Mammary epithelial cell (primary cell): ENCODE measurements at regions of chr2 and their contacts with region 1.

Region 1: DNA sequence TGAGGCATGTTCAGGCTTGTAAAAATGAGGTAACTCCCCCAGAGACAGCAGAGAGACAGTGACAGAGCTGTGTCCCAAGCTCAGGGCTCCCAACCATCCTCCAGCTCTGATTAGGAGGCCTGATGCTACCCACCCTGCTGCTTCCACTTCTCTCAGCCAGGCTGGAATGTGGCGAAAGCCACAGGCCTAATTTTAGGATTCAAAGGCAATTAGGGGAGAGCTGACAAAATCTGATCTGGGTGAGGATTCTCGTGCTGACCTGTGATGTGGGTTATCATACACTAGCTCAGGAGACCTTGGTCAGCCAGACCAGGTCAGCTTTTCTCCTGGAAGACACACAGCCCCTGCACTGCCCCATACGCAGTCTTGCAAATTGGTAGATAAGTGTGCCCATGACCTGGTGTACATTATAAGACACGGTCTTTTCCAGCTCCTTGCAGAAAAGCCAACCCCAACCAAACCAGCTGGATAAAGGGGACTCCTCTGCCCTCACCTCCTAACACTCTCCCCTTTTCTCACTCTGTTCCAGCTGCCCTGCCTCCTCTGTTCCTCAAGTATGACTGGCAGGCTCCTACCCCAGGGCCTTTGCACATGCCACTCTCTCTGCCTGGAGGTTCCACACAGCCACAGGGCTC is 225.9 kb downstream of the MGAT5 start:
- DNase-seq: no peak
- H3K4me3 ChIP-seq: no peak overlapping the region
- H3K27ac ChIP-seq: no peak overlapping the region
- H3K4me1 ChIP-seq: no peaks in the 10 kb centered on the region
- H3K27me3 ChIP-seq: peaks cover 2% of the 10 kb centered on the region
- CTCF ChIP-seq: no peak

Region 2: GRCh38 chr2:134512734-134513464 is 33.1 kb after region 1 on chr2:
- CTCF ChIA-PET with region 1: no interaction called
- dilution Hi-C with region 1: loop called (anchors 5 kb)
- in situ Hi-C with region 1: no loop called
- intact Hi-C with region 1: no loop called
- DNase-seq: peak; percentile 68
- H3K4me3 ChIP-seq: no peak overlapping the region
- H3K27ac ChIP-seq: no peak overlapping the region
- H3K4me1 ChIP-seq: peaks cover 11% of the 10 kb centered on the region
- H3K27me3 ChIP-seq: no peaks in the 10 kb centered on the region
- CTCF ChIP-seq: no peak

Region 3: GRCh38 chr2:134852518-134852917 is 372.7 kb after region 1 on chr2:
- CTCF ChIA-PET with region 1: no interaction called
- dilution Hi-C with region 1: no loop called
- in situ Hi-C with region 1: no loop called
- intact Hi-C with region 1: no loop called
- DNase-seq: no peak
- H3K4me3 ChIP-seq: no peak overlapping the region
- H3K27ac ChIP-seq: no peak overlapping the region
- H3K4me1 ChIP-seq: no peaks in the 10 kb centered on the region
- H3K27me3 ChIP-seq: no peaks in the 10 kb centered on the region
- CTCF ChIP-seq: no peak